Psoas muscle (tissue), 8 donors: ENCODE measurements at regions of chr4 and their contacts with region 1.

Region 1: GRCh38 chr4:186067757-186068385 is 1.1 kb upstream of the TLR3 start:
- DNase-seq: peak in 1 of 2 donors; percentile 56
- ATAC-seq: peak; percentile 85 to 96 (median 92)
- H3K4me3 ChIP-seq: peak overlapping the region; percentile 74
- H3K27ac ChIP-seq: peak overlapping the region; percentile 17
- H3K4me1 ChIP-seq: no peaks in the 10 kb centered on the region
- H3K27me3 ChIP-seq: no peaks in the 10 kb centered on the region
- CTCF ChIP-seq: peak; percentile 55

Region 2: GRCh38 chr4:185859111-185859510 is 208.8 kb before region 1 on chr4:
- intact Hi-C with region 1: no loop called
- DNase-seq: no peak
- ATAC-seq: no peak
- H3K4me3 ChIP-seq: no peak overlapping the region
- H3K27ac ChIP-seq: no peak overlapping the region
- H3K4me1 ChIP-seq: no peaks in the 10 kb centered on the region
- H3K27me3 ChIP-seq: no peaks in the 10 kb centered on the region
- CTCF ChIP-seq: no peak

Region 3: DNA sequence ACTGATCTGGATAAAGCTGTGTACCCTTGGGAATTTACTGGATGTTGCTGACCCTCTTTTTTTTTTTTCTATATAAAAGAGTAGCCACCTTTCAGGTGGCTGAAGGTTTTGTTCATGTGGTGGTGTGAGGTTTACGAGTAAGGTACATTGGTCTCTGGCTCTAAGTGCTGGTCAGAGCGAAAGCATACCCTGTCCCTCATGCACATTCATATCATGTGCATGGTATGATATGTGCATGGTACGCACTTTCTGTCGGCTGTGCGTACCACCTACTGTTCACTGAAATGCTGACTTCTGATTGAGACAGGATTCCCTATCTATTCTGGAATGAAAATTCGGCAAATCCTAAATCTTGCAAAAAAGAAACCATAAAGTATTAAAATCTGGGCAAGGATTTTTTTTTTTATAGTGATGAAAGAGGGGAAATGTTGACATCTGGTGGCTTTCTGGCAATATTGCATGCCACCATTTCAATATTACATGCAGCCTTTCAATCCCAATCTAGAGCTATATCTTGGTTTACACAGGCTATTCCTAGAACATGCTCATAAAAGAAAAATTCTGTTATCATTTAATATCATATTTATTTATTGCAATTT is 69.4 kb after region 1 on chr4:
- intact Hi-C with region 1: loop called in 1 of 2 experiments (anchors 5 kb)
- DNase-seq: no peak
- ATAC-seq: peak in 1 of 4 donors; percentile 43
- H3K4me3 ChIP-seq: no peak overlapping the region
- H3K27ac ChIP-seq: no peak overlapping the region
- H3K4me1 ChIP-seq: no peaks in the 10 kb centered on the region
- H3K27me3 ChIP-seq: no peaks in the 10 kb centered on the region
- CTCF ChIP-seq: peak; percentile 61

Region 4: GRCh38 chr4:186191200-186192065 is 123.6 kb after region 1 on chr4 and contains the start of gene CYP4V2:
- intact Hi-C with region 1: loop called (anchors 2 to 5 kb)
- DNase-seq: peak; percentile 82 to 89
- ATAC-seq: peak; percentile 83 to 91 (median 90)
- H3K4me3 ChIP-seq: peak within 1 kb of the TSS; percentile 94
- H3K27ac ChIP-seq: peak within 1 kb of the TSS; percentile 97
- H3K4me1 ChIP-seq: peaks cover 27% of the 10 kb centered on the region
- H3K27me3 ChIP-seq: no peaks in the 10 kb centered on the region
- CTCF ChIP-seq: peak; percentile 46
- total RNA-seq, gene CYP4V2: 3.9 to 6.8 (median 4.8) TPM